Esophagus muscularis mucosa (tissue), 4 donors: ENCODE measurements at regions of chr16 and their contacts with region 1.

Region 1: GRCh38 chr16:58548378-58548777 is 33.1 kb downstream of the SETD6 start:
- DNase-seq: no peak
- H3K4me3 ChIP-seq: no peak overlapping the region
- H3K27ac ChIP-seq: peak overlapping the region; percentile 19 to 48 (median 38)
- H3K4me1 ChIP-seq: peaks cover 12 to 47% (median 37%) of the 10 kb centered on the region in 4 donors
- H3K27me3 ChIP-seq: no peaks in the 10 kb centered on the region
- CTCF ChIP-seq: no peak
- EP300 ChIP-seq: no peak
- POLR2A ChIP-seq: no peak

Region 2: GRCh38 chr16:58129097-58129936 is 419.1 kb before region 1 on chr16 and contains the start of gene CFAP20:
- intact Hi-C with region 1: no loop called
- DNase-seq: peak; percentile 99
- H3K4me3 ChIP-seq: peak within 1 kb of the TSS; percentile 76 to 97 (median 86)
- H3K27ac ChIP-seq: peak within 1 kb of the TSS; percentile 88 to 93 (median 92)
- H3K4me1 ChIP-seq: peaks cover 39 to 48% (median 46%) of the 10 kb centered on the region in 4 donors
- H3K27me3 ChIP-seq: no peaks in the 10 kb centered on the region
- CTCF ChIP-seq: peak in 1 of 3 experiments; percentile 19
- EP300 ChIP-seq: no peak
- POLR2A ChIP-seq: peak; percentile 77
- total RNA-seq, gene CFAP20: 12.5 to 31.2 (median 23.5) TPM

Region 3: DNA sequence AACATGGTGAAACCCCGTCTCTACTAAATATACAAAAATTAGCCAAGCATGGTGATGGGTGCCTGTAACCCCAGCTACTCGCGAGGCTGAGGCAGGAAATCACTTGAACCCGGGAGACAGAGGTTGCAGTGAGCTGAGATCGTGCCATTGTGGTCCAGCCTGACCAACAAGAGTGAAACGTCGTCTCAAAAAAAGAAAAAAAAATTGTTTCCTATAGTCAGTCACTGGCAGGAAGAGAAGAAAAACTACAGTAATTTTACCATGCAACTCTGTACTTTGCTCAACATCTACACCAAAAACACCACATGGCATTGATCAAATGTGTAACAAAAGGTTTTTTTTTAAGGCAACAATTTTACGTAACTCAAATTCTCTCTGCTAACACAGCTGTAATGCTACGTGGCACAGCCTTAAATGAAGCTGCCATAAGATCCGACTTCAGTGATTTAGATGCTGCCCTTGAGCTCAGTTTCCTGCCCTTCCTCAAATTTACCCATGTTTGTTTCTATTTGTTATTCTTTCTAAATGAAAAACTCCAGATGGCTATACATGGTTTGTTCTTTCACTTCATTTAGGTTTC is 41.0 kb after region 1 on chr16:
- intact Hi-C with region 1: loop called (anchors 5 kb)
- DNase-seq: no peak
- H3K4me3 ChIP-seq: no peak overlapping the region
- H3K27ac ChIP-seq: no peak overlapping the region
- H3K4me1 ChIP-seq: peaks cover 0 to 16% (median 4%) of the 10 kb centered on the region in 4 donors
- H3K27me3 ChIP-seq: no peaks in the 10 kb centered on the region
- CTCF ChIP-seq: no peak
- EP300 ChIP-seq: no peak
- POLR2A ChIP-seq: no peak

Region 4: GRCh38 chr16:58614212-58614611 is 65.8 kb after region 1 on chr16:
- intact Hi-C with region 1: no loop called
- DNase-seq: no peak
- H3K4me3 ChIP-seq: no peak overlapping the region
- H3K27ac ChIP-seq: no peak overlapping the region
- H3K4me1 ChIP-seq: peaks cover 8 to 35% (median 20%) of the 10 kb centered on the region in 4 donors
- H3K27me3 ChIP-seq: no peaks in the 10 kb centered on the region
- CTCF ChIP-seq: no peak
- EP300 ChIP-seq: no peak
- POLR2A ChIP-seq: no peak